Activated CD8-positive, alpha-beta memory T cell treated with anti-CD3 and anti-CD28 coated beads, Interleukin-2, amount 10 ng/mL, durations not matched to agents 7 days and 5 days (primary cell): ENCODE measurements at regions of chr19 and their contacts with region 1.

Region 1: DNA sequence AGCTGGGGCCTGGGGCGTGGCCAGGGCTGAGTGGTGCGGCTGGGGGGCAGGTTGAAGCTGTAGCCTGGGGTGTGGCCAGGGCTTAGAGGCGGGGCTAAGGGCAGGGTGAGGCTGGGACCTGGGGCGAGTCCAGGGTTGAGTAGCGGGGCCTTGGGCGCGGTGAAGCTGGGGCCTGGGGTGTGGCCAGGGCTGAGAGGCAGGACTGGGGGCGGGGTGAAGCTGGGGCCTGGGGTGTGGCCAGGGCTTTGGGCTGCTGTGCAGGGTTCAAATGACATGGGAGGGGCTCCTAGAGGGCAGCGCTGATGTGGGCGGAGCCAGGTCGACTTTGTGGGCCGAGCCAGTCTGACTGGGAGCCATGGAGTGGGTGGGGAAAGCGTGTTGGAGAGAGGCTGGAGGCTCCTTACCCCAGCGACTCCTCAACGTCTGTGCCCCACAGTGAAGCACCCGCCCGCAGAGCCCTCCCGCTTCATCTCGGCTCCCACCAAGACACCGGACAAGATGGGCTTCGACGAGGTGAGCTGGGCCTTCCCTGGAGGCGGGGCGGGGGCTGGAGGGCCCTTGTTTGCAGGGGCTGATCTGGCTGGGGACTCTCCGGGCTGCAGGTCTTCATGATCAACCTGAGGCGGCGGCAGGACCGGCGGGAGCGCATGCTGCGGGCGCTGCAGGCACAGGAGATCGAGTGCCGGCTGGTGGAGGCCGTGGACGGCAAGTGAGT is 21.5 kb downstream of the COLGALT1 start:
- DNase-seq: peak; percentile 45
- ATAC-seq: peak; percentile 41
- H3K4me3 Mint-ChIP-seq: no peak overlapping the region
- H3K27ac Mint-ChIP-seq: no peak overlapping the region
- H3K4me1 Mint-ChIP-seq: peaks cover 2% of the 10 kb centered on the region
- H3K27me3 Mint-ChIP-seq: no peaks in the 10 kb centered on the region

Region 2: DNA sequence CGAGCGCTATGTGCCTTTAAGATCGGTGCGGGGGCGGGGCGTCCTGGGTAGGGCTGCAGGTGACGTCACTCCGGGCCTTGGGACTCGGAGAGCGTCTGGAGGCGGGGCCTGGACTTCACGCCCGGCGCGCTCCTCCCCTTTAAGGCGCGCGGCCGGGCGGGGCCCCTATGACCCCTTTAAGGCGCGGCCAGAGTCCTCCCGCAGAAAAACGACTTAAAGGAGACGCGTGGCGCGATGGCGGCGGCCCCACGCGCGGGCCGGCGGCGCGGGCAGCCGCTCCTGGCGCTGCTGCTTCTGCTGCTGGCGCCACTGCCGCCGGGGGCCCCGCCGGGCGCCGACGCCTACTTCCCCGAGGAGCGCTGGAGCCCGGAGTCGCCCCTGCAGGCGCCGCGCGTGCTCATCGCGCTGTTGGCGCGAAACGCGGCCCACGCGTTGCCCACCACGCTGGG is 21.4 kb before region 1 on chr19 and contains the start of gene COLGALT1:
- CTCF ChIA-PET with region 1: interaction called, 16 read pairs
- DNase-seq: peak; percentile 99
- ATAC-seq: peak; percentile 97
- H3K4me3 Mint-ChIP-seq: peak within 1 kb of the TSS; percentile 78
- H3K27ac Mint-ChIP-seq: peak within 1 kb of the TSS; percentile 77
- H3K4me1 Mint-ChIP-seq: peaks cover 12% of the 10 kb centered on the region
- H3K27me3 Mint-ChIP-seq: no peaks in the 10 kb centered on the region
- total RNA-seq, gene COLGALT1: 52.2 to 65.2 TPM

Region 3: GRCh38 chr19:17562561-17562960 is 14.4 kb before region 1 on chr19:
- CTCF ChIA-PET with region 1: interaction called, 16 read pairs
- DNase-seq: no peak
- ATAC-seq: no peak
- H3K4me3 Mint-ChIP-seq: no peak overlapping the region
- H3K27ac Mint-ChIP-seq: peak overlapping the region; percentile 2
- H3K4me1 Mint-ChIP-seq: no peaks in the 10 kb centered on the region
- H3K27me3 Mint-ChIP-seq: no peaks in the 10 kb centered on the region